GM12878 (cell line): ENCODE measurements at regions of chr3 and their contacts with region 1.

Region 1: DNA sequence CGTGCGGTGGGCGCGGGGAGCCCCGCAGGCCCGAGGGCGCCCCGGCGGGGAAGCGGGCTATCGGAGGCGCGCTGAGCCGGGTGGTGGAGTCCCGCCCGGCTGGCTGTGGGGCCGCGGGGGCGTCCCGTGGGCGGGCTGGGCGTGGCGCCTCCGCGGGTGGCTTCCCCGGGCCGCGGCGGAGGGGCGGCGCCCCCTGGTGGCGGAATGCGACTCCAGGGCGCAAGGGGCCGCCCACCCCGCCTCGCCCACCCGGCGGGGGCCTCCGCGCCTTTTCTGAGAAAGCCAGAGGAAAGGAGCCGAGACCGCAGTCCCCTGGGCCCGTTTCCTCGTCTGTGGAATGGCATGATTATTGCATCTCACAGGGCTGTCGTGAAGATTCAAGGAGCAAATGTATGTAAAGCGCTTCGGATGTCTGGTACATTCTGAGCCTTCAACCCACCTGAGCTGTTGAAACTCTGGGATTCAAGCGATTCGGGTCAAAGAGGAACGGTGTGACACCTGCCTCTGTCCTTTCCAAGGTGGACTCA is 31.9 kb upstream of the RAB6B start:
- DNase-seq: no peak
- ATAC-seq: peak; percentile 93
- H3K4me3 ChIP-seq: peak overlapping the region; percentile 74
- H3K27ac ChIP-seq: no peak overlapping the region
- H3K4me1 ChIP-seq: peaks cover 2% of the 10 kb centered on the region
- H3K27me3 ChIP-seq: peaks cover 0 to 2% of the 10 kb centered on the region in 2 experiments; a peak in 2 of 4 replicates
- CTCF ChIP-seq: peak; percentile 59 to 72 (median 61); a peak in 5 of 6 replicates
- EP300 ChIP-seq: no peak
- POLR2A ChIP-seq: no peak
- RAD21 ChIP-seq: peak; percentile 57

Region 2: GRCh38 chr3:132730891-132731580 is 1196.6 kb before region 1 on chr3:
- CTCF ChIA-PET with region 1: interaction called, 3 read pairs
- POLR2A ChIA-PET with region 1: no interaction called
- RAD21 ChIA-PET with region 1: no interaction called
- SMC1A ChIA-PET with region 1: interaction called, 4 read pairs
- in situ Hi-C with region 1: loop called (anchors 10 kb)
- intact Hi-C with region 1: loop called (anchors 1 kb)
- DNase-seq: no peak
- ATAC-seq: peak; percentile 70
- H3K4me3 ChIP-seq: no peak overlapping the region
- H3K27ac ChIP-seq: no peak overlapping the region
- H3K4me1 ChIP-seq: no peaks in the 10 kb centered on the region
- H3K27me3 ChIP-seq: no peaks in the 10 kb centered on the region; a peak in 2 of 4 replicates
- CTCF ChIP-seq: peak in 2 of 3 experiments; percentile 40 to 57; a peak in 3 of 6 replicates
- EP300 ChIP-seq: no peak
- POLR2A ChIP-seq: no peak
- RAD21 ChIP-seq: peak; percentile 77

Region 3: GRCh38 chr3:133426721-133427120 is 500.9 kb before region 1 on chr3:
- CTCF ChIA-PET with region 1: no interaction called
- POLR2A ChIA-PET with region 1: no interaction called
- RAD21 ChIA-PET with region 1: no interaction called
- SMC1A ChIA-PET with region 1: no interaction called
- in situ Hi-C with region 1: no loop called
- intact Hi-C with region 1: loop called (anchors 5 kb)
- DNase-seq: no peak
- ATAC-seq: no peak
- H3K4me3 ChIP-seq: no peak overlapping the region
- H3K27ac ChIP-seq: no peak overlapping the region
- H3K4me1 ChIP-seq: peaks cover 5% of the 10 kb centered on the region; the same call in 1 of the 2 replicates
- H3K27me3 ChIP-seq: peaks cover 0 to 4% of the 10 kb centered on the region in 2 experiments; a peak in 1 of 4 replicates
- CTCF ChIP-seq: no peak
- EP300 ChIP-seq: no peak
- POLR2A ChIP-seq: no peak
- RAD21 ChIP-seq: no peak

Region 4: GRCh38 chr3:133661454-133662277 is 265.9 kb before region 1 on chr3 and contains the start of gene TOPBP1:
- CTCF ChIA-PET with region 1: interaction called, 3 read pairs
- POLR2A ChIA-PET with region 1: no interaction called
- RAD21 ChIA-PET with region 1: no interaction called
- SMC1A ChIA-PET with region 1: no interaction called
- in situ Hi-C with region 1: no loop called
- intact Hi-C with region 1: loop called (anchors 2 kb)
- DNase-seq: no peak
- ATAC-seq: peak; percentile 86
- H3K4me3 ChIP-seq: peak within 1 kb of the TSS; percentile 95
- H3K27ac ChIP-seq: peak within 1 kb of the TSS; percentile 96
- H3K4me1 ChIP-seq: peaks cover 4% of the 10 kb centered on the region; the same call in 1 of the 2 replicates
- H3K27me3 ChIP-seq: no peaks in the 10 kb centered on the region
- CTCF ChIP-seq: no peak
- EP300 ChIP-seq: no peak
- POLR2A ChIP-seq: peak; percentile 92
- RAD21 ChIP-seq: no peak
- polyA plus RNA-seq, gene TOPBP1: 18.3 to 19.9 TPM

Region 5: GRCh38 chr3:133821767-133822638 is 105.6 kb before region 1 on chr3:
- CTCF ChIA-PET with region 1: interaction called, 14 read pairs
- POLR2A ChIA-PET with region 1: no interaction called
- RAD21 ChIA-PET with region 1: interaction called, 4 read pairs
- SMC1A ChIA-PET with region 1: interaction called, 3 read pairs
- in situ Hi-C with region 1: loop called (anchors 5 kb)
- intact Hi-C with region 1: loop called (anchors 1 kb)
- DNase-seq: no peak
- ATAC-seq: peak; percentile 26; the same call in 1 of the 3 replicates
- H3K4me3 ChIP-seq: no peak overlapping the region
- H3K27ac ChIP-seq: no peak overlapping the region
- H3K4me1 ChIP-seq: no peaks in the 10 kb centered on the region
- H3K27me3 ChIP-seq: no peaks in the 10 kb centered on the region
- CTCF ChIP-seq: 0 out of 6 replicates have a peak, but pooled peaks of 2 of the 3 experiments have one; percentile 9 to 17
- EP300 ChIP-seq: no peak
- POLR2A ChIP-seq: peak; percentile 53
- RAD21 ChIP-seq: no peak

Region 6: DNA sequence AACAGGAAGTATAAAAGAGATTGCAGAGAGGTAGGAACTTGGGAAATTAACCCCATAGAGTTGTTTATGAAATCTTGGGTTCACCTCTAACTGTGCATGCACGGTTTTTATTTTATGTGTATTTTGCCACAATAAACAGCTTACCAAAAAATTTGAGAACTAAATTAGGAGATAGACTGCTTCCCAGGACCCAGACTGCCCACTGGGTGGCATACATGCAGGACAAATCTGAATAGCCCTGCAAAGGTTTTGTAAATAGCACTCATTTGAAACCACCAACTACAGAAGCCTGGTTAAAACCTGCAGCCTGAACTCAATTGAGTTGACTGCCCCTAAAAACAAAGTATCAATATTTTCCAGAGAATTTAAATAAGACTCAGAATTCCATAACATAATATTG is 198.6 kb after region 1 on chr3:
- CTCF ChIA-PET with region 1: no interaction called
- POLR2A ChIA-PET with region 1: no interaction called
- RAD21 ChIA-PET with region 1: no interaction called
- SMC1A ChIA-PET with region 1: no interaction called
- in situ Hi-C with region 1: no loop called
- intact Hi-C with region 1: no loop called
- DNase-seq: no peak
- ATAC-seq: no peak
- H3K4me3 ChIP-seq: no peak overlapping the region
- H3K27ac ChIP-seq: no peak overlapping the region
- H3K4me1 ChIP-seq: no peaks in the 10 kb centered on the region
- H3K27me3 ChIP-seq: no peaks in the 10 kb centered on the region
- CTCF ChIP-seq: no peak
- EP300 ChIP-seq: no peak
- POLR2A ChIP-seq: no peak
- RAD21 ChIP-seq: no peak

Region 7: GRCh38 chr3:134186391-134186790 is 258.8 kb after region 1 on chr3:
- CTCF ChIA-PET with region 1: no interaction called
- POLR2A ChIA-PET with region 1: no interaction called
- RAD21 ChIA-PET with region 1: no interaction called
- SMC1A ChIA-PET with region 1: no interaction called
- in situ Hi-C with region 1: no loop called
- intact Hi-C with region 1: loop called (anchors 5 kb)
- DNase-seq: no peak
- ATAC-seq: no peak
- H3K4me3 ChIP-seq: no peak overlapping the region
- H3K27ac ChIP-seq: no peak overlapping the region
- H3K4me1 ChIP-seq: no peaks in the 10 kb centered on the region
- H3K27me3 ChIP-seq: no peaks in the 10 kb centered on the region
- CTCF ChIP-seq: no peak
- EP300 ChIP-seq: no peak
- POLR2A ChIP-seq: no peak
- RAD21 ChIP-seq: no peak

Region 8: DNA sequence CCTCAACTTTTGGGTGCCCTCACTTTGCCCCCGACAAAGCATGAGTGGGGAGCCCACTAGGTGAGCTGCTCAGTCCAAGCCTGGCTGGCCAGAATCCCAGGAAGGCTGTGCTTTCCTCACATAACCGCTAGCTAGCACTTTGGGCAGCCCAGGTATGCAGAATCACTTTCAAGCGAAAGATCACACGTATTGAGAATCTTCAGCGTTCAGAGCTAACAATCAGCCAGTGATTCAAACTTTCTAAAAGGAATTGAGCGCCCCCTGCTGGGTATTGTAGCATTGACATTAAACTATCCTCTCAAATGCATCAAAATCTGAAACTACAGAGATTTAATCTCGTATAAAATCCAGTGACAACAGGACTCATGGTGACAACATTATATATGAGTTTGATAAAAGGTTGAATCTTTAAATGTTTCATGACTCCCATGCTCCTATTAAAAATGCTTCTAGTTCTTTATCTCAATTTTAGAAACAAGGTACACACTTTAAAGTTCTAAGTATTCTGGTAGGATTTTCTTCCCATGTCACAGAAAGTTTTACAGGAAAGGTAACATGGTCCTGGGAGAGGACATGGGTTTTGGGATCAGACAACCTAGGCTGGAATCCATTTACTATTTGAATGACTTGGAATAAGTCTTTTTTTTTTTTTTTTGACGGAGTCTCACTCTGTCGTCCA is 546.4 kb after region 1 on chr3:
- CTCF ChIA-PET with region 1: interaction called, 3 read pairs
- POLR2A ChIA-PET with region 1: no interaction called
- RAD21 ChIA-PET with region 1: no interaction called
- SMC1A ChIA-PET with region 1: no interaction called
- in situ Hi-C with region 1: no loop called
- intact Hi-C with region 1: loop called (anchors 10 kb)
- DNase-seq: no peak
- ATAC-seq: peak; percentile 88
- H3K4me3 ChIP-seq: no peak overlapping the region
- H3K27ac ChIP-seq: no peak overlapping the region
- H3K4me1 ChIP-seq: no peaks in the 10 kb centered on the region
- H3K27me3 ChIP-seq: no peaks in the 10 kb centered on the region
- CTCF ChIP-seq: peak; percentile 53 to 76 (median 65)
- EP300 ChIP-seq: no peak
- POLR2A ChIP-seq: no peak
- RAD21 ChIP-seq: peak; percentile 76